CD4-positive, alpha-beta memory T cell (primary cell): ENCODE measurements at regions of chr17 and their contacts with region 1.

Region 1: DNA sequence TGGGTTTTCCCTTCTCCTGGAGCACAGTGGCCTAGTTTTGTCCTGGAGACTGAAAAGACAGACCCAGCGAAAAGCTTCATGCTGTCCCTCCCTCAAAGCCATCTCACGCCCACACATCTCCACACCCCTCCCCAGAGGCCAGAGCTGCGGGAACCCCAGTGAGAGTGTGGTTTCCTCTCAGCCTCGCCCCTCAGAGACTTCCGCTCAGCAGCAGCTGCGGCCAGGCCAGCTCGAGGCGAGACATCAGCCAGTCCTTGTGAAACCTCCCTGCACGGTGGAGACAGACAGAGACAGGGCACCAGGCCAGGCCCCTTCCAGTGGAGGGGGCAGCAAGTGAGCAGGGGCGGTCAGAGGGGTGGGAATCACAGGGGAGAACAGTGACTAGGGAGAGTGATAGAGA is 77.0 kb upstream of the TNRC6C start:
- DNase-seq: peak; percentile 73 to 85 (median 75)
- H3K4me3 ChIP-seq: peak overlapping the region; percentile 39 to 55
- H3K4me3 Mint-ChIP-seq: peak overlapping the region; percentile 80 to 92 (median 86)
- H3K27ac ChIP-seq: peak overlapping the region; percentile 99
- H3K27ac Mint-ChIP-seq: peak overlapping the region; percentile 96 to 100 (median 99)
- H3K4me1 ChIP-seq: peaks cover 89% of the 10 kb centered on the region
- H3K4me1 Mint-ChIP-seq: peaks cover 65 to 94% (median 81%) of the 10 kb centered on the region in 4 donors
- H3K27me3 ChIP-seq: no peaks in the 10 kb centered on the region
- H3K27me3 Mint-ChIP-seq: no peaks in the 10 kb centered on the region

Region 2: DNA sequence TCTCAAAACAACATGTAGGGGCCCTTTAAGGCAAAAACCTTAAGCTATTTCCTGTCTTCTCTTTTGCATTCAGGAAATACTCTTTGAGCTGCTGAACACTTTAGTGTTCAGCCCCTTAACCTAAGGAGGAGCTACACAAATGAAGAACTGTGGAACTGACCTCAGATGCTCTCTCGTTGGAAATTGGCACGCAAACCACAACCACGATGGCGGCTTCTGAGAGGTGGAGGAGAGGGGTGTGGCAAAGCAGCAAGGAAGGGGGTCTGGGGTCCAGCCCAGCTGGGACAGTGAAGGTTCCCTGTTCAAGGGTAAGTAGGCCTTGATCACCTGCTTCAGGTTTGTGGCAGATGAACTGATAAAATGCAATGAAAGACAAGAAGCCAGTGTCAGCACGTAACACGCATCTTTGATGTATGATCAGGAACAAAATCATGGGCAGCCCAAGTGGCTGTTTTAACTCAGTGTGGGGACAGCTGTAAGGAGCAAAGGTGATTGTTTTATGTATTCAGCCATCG is 214.6 kb before region 1 on chr17:
- CTCF ChIA-PET with region 1: no interaction called
- POLR2A ChIA-PET with region 1: interaction called, 6 read pairs
- intact Hi-C with region 1: loop called (anchors 10 kb)
- DNase-seq: peak; percentile 83 to 89 (median 84)
- H3K4me3 ChIP-seq: peak overlapping the region; percentile 49 to 53
- H3K4me3 Mint-ChIP-seq: peak overlapping the region; percentile 81 to 98 (median 90)
- H3K27ac ChIP-seq: peak overlapping the region; percentile 54
- H3K27ac Mint-ChIP-seq: peak overlapping the region; percentile 82 to 98 (median 97)
- H3K4me1 ChIP-seq: peaks cover 35% of the 10 kb centered on the region
- H3K4me1 Mint-ChIP-seq: peaks cover 44 to 64% (median 50%) of the 10 kb centered on the region in 4 donors
- H3K27me3 ChIP-seq: no peaks in the 10 kb centered on the region
- H3K27me3 Mint-ChIP-seq: no peaks in the 10 kb centered on the region

Region 3: GRCh38 chr17:77690271-77691161 is 191.0 kb before region 1 on chr17:
- CTCF ChIA-PET with region 1: no interaction called
- POLR2A ChIA-PET with region 1: no interaction called
- intact Hi-C with region 1: no loop called
- DNase-seq: peak in 3 of 5 donors; percentile 16 to 18 (median 18)
- H3K4me3 ChIP-seq: peak overlapping the region in 1 of 2 donors; percentile 24
- H3K4me3 Mint-ChIP-seq: peak overlapping the region; percentile 48 to 78 (median 68)
- H3K27ac ChIP-seq: no peak overlapping the region
- H3K27ac Mint-ChIP-seq: peak overlapping the region in 3 of 7 donors; percentile 12 to 59 (median 29)
- H3K4me1 ChIP-seq: peaks cover 30% of the 10 kb centered on the region
- H3K4me1 Mint-ChIP-seq: peaks cover 20 to 47% (median 35%) of the 10 kb centered on the region in 4 donors
- H3K27me3 ChIP-seq: no peaks in the 10 kb centered on the region
- H3K27me3 Mint-ChIP-seq: peaks cover 7 to 9% of the 10 kb centered on the region in 2 donors

Region 4: GRCh38 chr17:77783991-77784820 is 97.3 kb before region 1 on chr17:
- CTCF ChIA-PET with region 1: interaction called, 3 read pairs
- POLR2A ChIA-PET with region 1: interaction called, 40 read pairs
- intact Hi-C with region 1: loop called (anchors 2 kb)
- DNase-seq: peak; percentile 76 to 90 (median 81)
- H3K4me3 ChIP-seq: no peak overlapping the region
- H3K4me3 Mint-ChIP-seq: peak overlapping the region; percentile 52 to 84 (median 67)
- H3K27ac ChIP-seq: peak overlapping the region; percentile 76
- H3K27ac Mint-ChIP-seq: peak overlapping the region; percentile 94 to 99 (median 97)
- H3K4me1 ChIP-seq: peaks cover 26% of the 10 kb centered on the region
- H3K4me1 Mint-ChIP-seq: peaks cover 13 to 26% (median 18%) of the 10 kb centered on the region in 4 donors
- H3K27me3 ChIP-seq: no peaks in the 10 kb centered on the region
- H3K27me3 Mint-ChIP-seq: no peaks in the 10 kb centered on the region

Region 5: DNA sequence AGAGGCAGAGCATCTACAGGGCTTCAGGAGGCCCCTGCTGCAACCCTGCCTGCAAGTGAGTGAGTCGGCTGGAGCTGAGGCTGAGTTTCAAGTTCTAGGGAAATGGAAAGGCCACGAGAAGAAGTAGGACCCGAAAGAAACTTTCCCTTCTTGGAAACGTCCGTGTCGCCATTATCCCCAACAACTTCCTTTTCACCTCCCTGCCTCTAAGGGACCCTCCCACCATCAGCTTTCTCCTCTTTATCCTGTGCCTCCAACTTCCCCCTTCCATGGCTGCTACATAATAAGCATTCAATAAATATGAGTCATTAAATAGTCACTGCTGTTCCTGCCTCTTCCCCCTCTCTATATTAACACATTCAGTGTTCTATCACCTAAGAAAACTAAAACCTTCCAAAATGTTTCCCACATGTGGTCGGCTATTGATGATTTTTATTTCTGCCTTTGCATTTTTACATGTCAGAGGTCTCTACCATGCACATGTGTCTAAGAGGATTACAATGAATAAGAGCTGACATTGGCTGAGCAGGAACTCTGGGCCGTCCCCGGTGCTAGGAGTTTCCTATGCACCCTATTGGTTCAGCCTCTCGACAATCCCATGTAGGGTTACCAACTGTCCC is 38.9 kb before region 1 on chr17:
- CTCF ChIA-PET with region 1: interaction called, 3 read pairs
- POLR2A ChIA-PET with region 1: interaction called, 94 read pairs
- intact Hi-C with region 1: loop called (anchors 2 kb)
- DNase-seq: no peak
- H3K4me3 ChIP-seq: no peak overlapping the region
- H3K4me3 Mint-ChIP-seq: peak overlapping the region in 7 of 8 donors; percentile 4 to 85 (median 69)
- H3K27ac ChIP-seq: no peak overlapping the region
- H3K27ac Mint-ChIP-seq: peak overlapping the region; percentile 87 to 97 (median 93)
- H3K4me1 ChIP-seq: peaks cover 63% of the 10 kb centered on the region
- H3K4me1 Mint-ChIP-seq: peaks cover 34 to 74% (median 43%) of the 10 kb centered on the region in 4 donors
- H3K27me3 ChIP-seq: no peaks in the 10 kb centered on the region
- H3K27me3 Mint-ChIP-seq: no peaks in the 10 kb centered on the region

Region 6: DNA sequence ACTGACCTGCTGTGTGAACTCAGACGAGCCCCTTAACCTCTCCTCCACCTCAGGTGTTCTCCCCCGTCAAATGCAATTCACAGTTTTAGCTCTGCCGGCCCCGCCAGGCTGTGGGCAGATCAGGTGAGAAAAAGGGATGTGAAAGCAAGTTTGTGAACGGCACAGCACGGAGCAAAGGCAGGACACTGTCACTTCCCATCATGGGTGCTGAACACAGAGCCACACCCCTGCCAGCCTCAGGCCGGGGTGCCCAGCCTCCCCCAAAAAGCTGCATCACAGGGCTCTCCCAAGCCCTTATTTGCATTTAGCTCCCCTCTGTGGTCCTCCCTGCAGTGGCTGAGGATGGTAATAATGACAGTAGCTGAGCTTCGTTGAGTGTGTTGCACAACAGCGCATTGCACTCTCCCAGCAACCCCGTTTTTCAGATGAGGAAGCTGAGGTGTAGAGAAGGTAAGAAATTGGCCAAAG is 11.8 kb before region 1 on chr17:
- CTCF ChIA-PET with region 1: interaction called, 3 read pairs
- POLR2A ChIA-PET with region 1: interaction called, 23 read pairs
- intact Hi-C with region 1: loop called (anchors 1 kb)
- DNase-seq: no peak
- H3K4me3 ChIP-seq: no peak overlapping the region
- H3K4me3 Mint-ChIP-seq: peak overlapping the region in 7 of 8 donors; percentile 1 to 78 (median 72)
- H3K27ac ChIP-seq: no peak overlapping the region
- H3K27ac Mint-ChIP-seq: peak overlapping the region in 6 of 7 donors; percentile 24 to 87 (median 46)
- H3K4me1 ChIP-seq: peaks cover 45% of the 10 kb centered on the region
- H3K4me1 Mint-ChIP-seq: peaks cover 35 to 70% (median 45%) of the 10 kb centered on the region in 4 donors
- H3K27me3 ChIP-seq: no peaks in the 10 kb centered on the region
- H3K27me3 Mint-ChIP-seq: no peaks in the 10 kb centered on the region

Region 7: DNA sequence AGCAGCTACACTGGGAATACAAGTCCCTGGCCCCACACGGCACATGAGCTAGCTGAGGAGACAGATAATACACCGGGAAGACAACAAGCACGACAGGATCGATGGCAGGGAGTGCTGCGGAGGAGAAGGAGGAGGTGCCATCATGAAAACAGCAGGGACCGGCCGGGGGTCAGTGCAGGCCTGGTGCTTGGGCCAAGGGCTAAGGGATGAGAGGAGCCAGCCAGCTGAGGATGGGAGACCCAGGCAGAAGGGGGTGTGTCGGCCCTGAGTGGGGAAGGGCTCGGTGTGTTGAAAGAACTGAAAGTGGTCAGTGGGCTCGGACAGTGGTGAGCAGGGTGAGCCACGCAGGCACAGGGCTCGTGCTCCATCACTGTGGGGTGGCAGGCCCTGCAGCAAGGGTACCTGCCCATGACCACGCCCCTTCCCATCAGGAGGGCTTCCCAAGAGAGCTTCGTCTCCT is 26.0 kb after region 1 on chr17:
- CTCF ChIA-PET with region 1: no interaction called
- POLR2A ChIA-PET with region 1: no interaction called
- intact Hi-C with region 1: no loop called
- DNase-seq: no peak
- H3K4me3 ChIP-seq: no peak overlapping the region
- H3K4me3 Mint-ChIP-seq: no peak overlapping the region
- H3K27ac ChIP-seq: no peak overlapping the region
- H3K27ac Mint-ChIP-seq: no peak overlapping the region
- H3K4me1 ChIP-seq: no peaks in the 10 kb centered on the region
- H3K4me1 Mint-ChIP-seq: no peaks in the 10 kb centered on the region
- H3K27me3 ChIP-seq: no peaks in the 10 kb centered on the region
- H3K27me3 Mint-ChIP-seq: peaks cover 3 to 10% of the 10 kb centered on the region in 2 donors

Region 8: GRCh38 chr17:78300962-78301822 is 419.6 kb after region 1 on chr17:
- CTCF ChIA-PET with region 1: no interaction called
- POLR2A ChIA-PET with region 1: no interaction called
- intact Hi-C with region 1: no loop called
- DNase-seq: no peak
- H3K4me3 ChIP-seq: no peak overlapping the region
- H3K4me3 Mint-ChIP-seq: peak overlapping the region in 2 of 8 donors; percentile 33 to 35
- H3K27ac ChIP-seq: no peak overlapping the region
- H3K27ac Mint-ChIP-seq: peak overlapping the region in 3 of 7 donors; percentile 31 to 84 (median 57)
- H3K4me1 ChIP-seq: peaks cover 8% of the 10 kb centered on the region
- H3K4me1 Mint-ChIP-seq: peaks cover 6 to 8% (median 7%) of the 10 kb centered on the region in 4 donors
- H3K27me3 ChIP-seq: no peaks in the 10 kb centered on the region
- H3K27me3 Mint-ChIP-seq: no peaks in the 10 kb centered on the region